Gastrocnemius medialis (tissue), 4 donors: ENCODE measurements at regions of chr4 and their contacts with region 1.

Region 1: DNA sequence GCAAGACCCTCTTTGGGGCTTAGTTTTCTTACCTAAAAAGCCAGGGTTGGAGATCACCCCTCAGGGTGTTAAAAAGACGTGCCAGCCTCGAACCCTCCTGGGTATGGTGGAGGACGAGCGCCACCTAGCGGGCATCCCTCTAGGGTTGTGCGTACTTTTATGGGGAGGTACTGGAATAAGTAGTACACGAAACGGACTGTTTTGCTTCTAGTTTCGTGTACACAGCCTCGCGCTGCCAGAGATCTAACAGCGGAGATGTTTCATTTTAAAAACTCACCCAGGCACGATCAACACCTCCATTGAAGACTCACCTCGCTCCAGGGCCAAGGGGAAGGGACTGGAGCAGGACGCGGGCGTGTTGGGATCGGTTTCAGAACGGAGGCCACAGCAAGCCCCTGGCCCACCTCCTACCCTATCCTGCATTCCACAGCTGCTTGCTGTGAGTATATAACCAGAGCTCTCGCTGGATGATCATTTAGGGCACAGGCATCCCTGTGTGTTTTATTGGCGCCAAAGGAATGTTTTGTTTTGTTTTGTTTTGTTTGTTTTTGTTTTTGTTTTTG is 4.8 kb upstream of the NKX3-2 start:
- DNase-seq: peak in 1 of 2 donors; percentile 40
- ATAC-seq: peak; percentile 60
- H3K4me3 ChIP-seq: peak overlapping the region in 3 of 4 donors; percentile 10 to 44 (median 35)
- H3K27ac ChIP-seq: no peak overlapping the region
- H3K4me1 ChIP-seq: peaks cover 9 to 21% of the 10 kb centered on the region in 2 donors
- H3K27me3 ChIP-seq: peaks cover 66 to 78% (median 67%) of the 10 kb centered on the region in 3 donors
- CTCF ChIP-seq: peak; percentile 60 to 90 (median 81)
- POLR2A ChIP-seq: no peak

Region 2: GRCh38 chr4:12729384-12729783 is 819.7 kb before region 1 on chr4:
- in situ Hi-C with region 1: loop called (anchors 10 to 25 kb)
- intact Hi-C with region 1: loop called (anchors 2 kb)
- DNase-seq: no peak
- ATAC-seq: no peak
- H3K4me3 ChIP-seq: no peak overlapping the region
- H3K27ac ChIP-seq: no peak overlapping the region
- H3K4me1 ChIP-seq: no peaks in the 10 kb centered on the region
- H3K27me3 ChIP-seq: no peaks in the 10 kb centered on the region
- CTCF ChIP-seq: peak in 2 of 5 experiments; percentile 26 to 44
- POLR2A ChIP-seq: no peak

Region 3: GRCh38 chr4:12734586-12734985 is 814.5 kb before region 1 on chr4:
- in situ Hi-C with region 1: loop called (anchors 10 to 25 kb)
- intact Hi-C with region 1: loop called (anchors 2 kb)
- DNase-seq: no peak
- ATAC-seq: no peak
- H3K4me3 ChIP-seq: no peak overlapping the region
- H3K27ac ChIP-seq: no peak overlapping the region
- H3K4me1 ChIP-seq: no peaks in the 10 kb centered on the region
- H3K27me3 ChIP-seq: no peaks in the 10 kb centered on the region
- CTCF ChIP-seq: no peak
- POLR2A ChIP-seq: no peak

Region 4: GRCh38 chr4:12846368-12846767 is 702.7 kb before region 1 on chr4:
- in situ Hi-C with region 1: loop called (anchors 5 to 10 kb)
- intact Hi-C with region 1: no loop called
- DNase-seq: no peak
- ATAC-seq: no peak
- H3K4me3 ChIP-seq: no peak overlapping the region
- H3K27ac ChIP-seq: no peak overlapping the region
- H3K4me1 ChIP-seq: no peaks in the 10 kb centered on the region
- H3K27me3 ChIP-seq: no peaks in the 10 kb centered on the region
- CTCF ChIP-seq: no peak
- POLR2A ChIP-seq: no peak

Region 5: GRCh38 chr4:12852338-12853307 is 696.4 kb before region 1 on chr4:
- in situ Hi-C with region 1: loop called (anchors 5 to 10 kb)
- intact Hi-C with region 1: loop called (anchors 1 kb)
- DNase-seq: no peak
- ATAC-seq: no peak
- H3K4me3 ChIP-seq: no peak overlapping the region
- H3K27ac ChIP-seq: no peak overlapping the region
- H3K4me1 ChIP-seq: no peaks in the 10 kb centered on the region
- H3K27me3 ChIP-seq: peaks cover 0 to 6% (median 0%) of the 10 kb centered on the region in 3 donors
- CTCF ChIP-seq: peak in 4 of 5 experiments; percentile 13 to 50 (median 37)
- POLR2A ChIP-seq: no peak